ENCODE measurements at regions of chrX and their contacts with region 1.

Region 1: GRCh38 chrX:77514177-77514576 is 67.0 kb downstream of the FGF16 start:
- DNase-seq: no peak
- ATAC-seq: no peak
- H3K4me3 ChIP-seq: no peak overlapping the region
- H3K4me3 Mint-ChIP-seq: no peak overlapping the region
- H3K27ac ChIP-seq: no peak overlapping the region
- H3K27ac Mint-ChIP-seq: no peak overlapping the region
- H3K4me1 ChIP-seq: no peaks in the 10 kb centered on the region
- H3K4me1 Mint-ChIP-seq: peaks cover 12% of the 10 kb centered on the region
- H3K27me3 ChIP-seq: no peaks in the 10 kb centered on the region
- H3K27me3 Mint-ChIP-seq: no peaks in the 10 kb centered on the region
- CTCF ChIP-seq: no peak

Region 2: DNA sequence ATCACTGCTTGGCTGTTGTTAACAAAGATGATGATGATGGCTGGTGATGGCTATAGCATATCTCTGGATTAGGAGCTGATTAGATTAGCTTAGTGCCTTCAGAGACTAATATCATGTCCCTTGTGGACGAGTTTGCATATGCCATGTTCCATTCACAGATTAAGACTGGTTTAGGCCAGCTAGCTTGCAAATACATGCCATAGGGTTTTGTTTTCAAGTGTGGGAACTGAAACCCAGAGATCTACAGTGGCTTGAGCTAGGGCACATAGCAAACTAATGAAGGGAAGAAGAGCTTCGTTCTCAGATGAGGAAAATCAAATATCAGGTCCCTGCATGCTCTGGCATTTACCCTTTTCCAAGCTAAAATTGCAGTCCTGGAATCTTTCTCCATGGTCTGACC is 594.4 kb before region 1 on chrX:
- CTCF ChIA-PET with region 1: no interaction called
- POLR2A ChIA-PET with region 1: no interaction called
- intact Hi-C with region 1: no loop called
- DNase-seq: no peak
- ATAC-seq: no peak
- H3K4me3 ChIP-seq: no peak overlapping the region
- H3K4me3 Mint-ChIP-seq: no peak overlapping the region
- H3K27ac ChIP-seq: no peak overlapping the region
- H3K27ac Mint-ChIP-seq: no peak overlapping the region
- H3K4me1 ChIP-seq: no peaks in the 10 kb centered on the region
- H3K4me1 Mint-ChIP-seq: no peaks in the 10 kb centered on the region
- H3K27me3 ChIP-seq: no peaks in the 10 kb centered on the region
- H3K27me3 Mint-ChIP-seq: no peaks in the 10 kb centered on the region
- CTCF ChIP-seq: no peak

Region 3: GRCh38 chrX:77426811-77427210 is 87.4 kb before region 1 on chrX:
- CTCF ChIA-PET with region 1: no interaction called
- POLR2A ChIA-PET with region 1: no interaction called
- intact Hi-C with region 1: no loop called
- DNase-seq: no peak
- ATAC-seq: no peak
- H3K4me3 ChIP-seq: no peak overlapping the region
- H3K4me3 Mint-ChIP-seq: no peak overlapping the region
- H3K27ac ChIP-seq: no peak overlapping the region
- H3K27ac Mint-ChIP-seq: no peak overlapping the region
- H3K4me1 ChIP-seq: no peaks in the 10 kb centered on the region
- H3K4me1 Mint-ChIP-seq: no peaks in the 10 kb centered on the region
- H3K27me3 ChIP-seq: no peaks in the 10 kb centered on the region
- H3K27me3 Mint-ChIP-seq: no peaks in the 10 kb centered on the region
- CTCF ChIP-seq: no peak

Region 4: DNA sequence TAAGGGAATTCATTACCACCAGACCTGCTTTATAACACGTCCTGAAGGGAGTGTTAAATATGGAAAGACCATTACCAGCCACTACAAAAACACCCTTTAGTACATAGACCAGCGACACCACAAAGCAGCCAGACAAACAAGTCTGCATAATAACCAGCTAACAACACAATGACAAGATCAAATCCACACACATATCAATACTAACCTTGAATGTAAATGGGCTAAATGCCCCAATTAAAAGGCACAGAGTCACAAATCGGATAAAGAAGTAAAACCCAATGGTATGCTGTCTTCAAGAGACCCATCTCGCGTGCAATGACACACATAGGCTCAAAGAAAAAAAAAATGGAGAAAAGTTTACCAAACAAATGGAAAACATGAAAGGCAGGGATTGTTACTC is 30.1 kb before region 1 on chrX:
- CTCF ChIA-PET with region 1: no interaction called
- POLR2A ChIA-PET with region 1: no interaction called
- intact Hi-C with region 1: loop called in 1 of 2 experiments (anchors 1 kb)
- DNase-seq: no peak
- ATAC-seq: no peak
- H3K4me3 ChIP-seq: no peak overlapping the region
- H3K4me3 Mint-ChIP-seq: no peak overlapping the region
- H3K27ac ChIP-seq: no peak overlapping the region
- H3K27ac Mint-ChIP-seq: no peak overlapping the region
- H3K4me1 ChIP-seq: no peaks in the 10 kb centered on the region
- H3K4me1 Mint-ChIP-seq: no peaks in the 10 kb centered on the region
- H3K27me3 ChIP-seq: no peaks in the 10 kb centered on the region
- H3K27me3 Mint-ChIP-seq: peaks cover 5% of the 10 kb centered on the region
- CTCF ChIP-seq: no peak